Calu3 (cell line): ENCODE measurements at regions of chr1 and their contacts with region 1.

Region 1: DNA sequence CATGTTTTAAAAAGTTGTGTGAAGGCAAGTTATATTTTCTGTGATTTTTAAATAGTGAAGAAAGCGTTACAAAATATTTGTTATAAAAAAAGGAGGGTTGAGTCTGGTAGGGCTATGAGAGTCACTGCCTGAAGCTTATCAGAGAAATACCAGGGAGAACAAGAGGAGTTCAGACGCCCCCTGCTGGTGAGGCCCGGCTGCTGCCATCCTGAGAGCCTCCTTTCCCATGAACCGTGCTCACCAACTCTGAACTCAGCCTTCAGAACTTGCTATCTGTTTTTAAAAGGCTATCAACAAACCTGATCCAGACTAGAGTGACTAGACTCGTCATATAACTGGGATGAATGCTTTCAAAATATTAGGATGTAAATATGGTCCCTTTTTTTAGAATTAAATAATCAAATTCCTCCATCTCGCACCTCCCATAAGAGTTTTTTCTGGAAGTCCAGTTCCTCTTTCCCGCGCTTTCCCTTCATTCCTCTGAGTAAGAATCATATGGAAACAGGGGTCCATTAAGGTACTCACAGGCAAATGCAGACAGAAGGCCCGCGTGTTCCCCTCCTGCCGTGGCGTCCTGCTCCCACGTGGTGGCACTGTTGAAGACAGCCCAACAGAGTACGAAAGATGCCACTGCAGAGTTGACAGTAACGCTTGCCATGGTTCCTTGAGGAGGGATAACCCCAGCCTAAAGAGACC is 26.2 kb upstream of the SPATA6 start:
- DNase-seq: peak; percentile 87
- H3K4me3 Mint-ChIP-seq: peak overlapping the region; percentile 22
- H3K27ac Mint-ChIP-seq: no peak overlapping the region
- H3K4me1 Mint-ChIP-seq: peaks cover 20% of the 10 kb centered on the region
- H3K27me3 Mint-ChIP-seq: no peaks in the 10 kb centered on the region
- CTCF ChIP-seq: peak; percentile 77

Region 2: GRCh38 chr1:48093696-48094528 is 404.3 kb before region 1 on chr1:
- CTCF ChIA-PET with region 1: no interaction called
- intact Hi-C with region 1: loop called (anchors 5 kb)
- DNase-seq: peak; percentile 94
- H3K4me3 Mint-ChIP-seq: peak overlapping the region; percentile 78
- H3K27ac Mint-ChIP-seq: peak overlapping the region; percentile 67
- H3K4me1 Mint-ChIP-seq: peaks cover 14% of the 10 kb centered on the region
- H3K27me3 Mint-ChIP-seq: peaks cover 65% of the 10 kb centered on the region
- CTCF ChIP-seq: peak; percentile 95

Region 3: GRCh38 chr1:48236716-48237470 is 261.4 kb before region 1 on chr1:
- CTCF ChIA-PET with region 1: no interaction called
- intact Hi-C with region 1: loop called (anchors 5 kb)
- DNase-seq: peak; percentile 12
- H3K4me3 Mint-ChIP-seq: no peak overlapping the region
- H3K27ac Mint-ChIP-seq: no peak overlapping the region
- H3K4me1 Mint-ChIP-seq: no peaks in the 10 kb centered on the region
- H3K27me3 Mint-ChIP-seq: peaks cover 10% of the 10 kb centered on the region
- CTCF ChIP-seq: peak; percentile 29

Region 4: GRCh38 chr1:48356901-48357300 is 141.3 kb before region 1 on chr1:
- CTCF ChIA-PET with region 1: interaction called, 3 read pairs
- intact Hi-C with region 1: loop called (anchors 1 kb)
- DNase-seq: no peak
- H3K4me3 Mint-ChIP-seq: no peak overlapping the region
- H3K27ac Mint-ChIP-seq: no peak overlapping the region
- H3K4me1 Mint-ChIP-seq: no peaks in the 10 kb centered on the region
- H3K27me3 Mint-ChIP-seq: no peaks in the 10 kb centered on the region
- CTCF ChIP-seq: no peak

Region 5: DNA sequence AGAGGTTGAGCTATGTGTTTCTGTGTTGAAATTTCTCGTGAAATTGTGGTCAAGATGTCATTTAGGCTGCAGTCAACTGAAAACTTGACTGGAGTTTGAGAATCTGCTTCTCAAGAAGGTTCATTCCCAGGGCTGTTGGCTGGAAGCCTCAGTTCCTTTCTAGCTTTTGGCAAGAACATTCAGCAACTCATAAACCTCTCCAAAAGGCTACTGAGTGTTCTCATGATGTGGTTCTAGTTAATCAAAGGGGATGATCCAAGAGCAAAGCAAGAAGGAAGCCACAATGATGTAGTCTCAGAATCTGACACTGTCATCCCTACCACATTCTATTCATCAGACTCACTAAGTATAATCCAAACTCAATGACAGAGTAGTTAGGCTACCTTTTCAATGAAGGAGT is 92.8 kb before region 1 on chr1:
- CTCF ChIA-PET with region 1: no interaction called
- intact Hi-C with region 1: no loop called
- DNase-seq: no peak
- H3K4me3 Mint-ChIP-seq: no peak overlapping the region
- H3K27ac Mint-ChIP-seq: no peak overlapping the region
- H3K4me1 Mint-ChIP-seq: no peaks in the 10 kb centered on the region
- H3K27me3 Mint-ChIP-seq: no peaks in the 10 kb centered on the region
- CTCF ChIP-seq: no peak

Region 6: GRCh38 chr1:48471691-48472576 is 26.3 kb before region 1 on chr1 and contains the start of gene SPATA6:
- CTCF ChIA-PET with region 1: interaction called, 18 read pairs
- intact Hi-C with region 1: no loop called
- DNase-seq: peak; percentile 94
- H3K4me3 Mint-ChIP-seq: peak within 1 kb of the TSS; percentile 90
- H3K27ac Mint-ChIP-seq: peak within 1 kb of the TSS; percentile 87
- H3K4me1 Mint-ChIP-seq: peaks cover 22% of the 10 kb centered on the region
- H3K27me3 Mint-ChIP-seq: no peaks in the 10 kb centered on the region
- CTCF ChIP-seq: no peak
- total RNA-seq, gene SPATA6: 7.1 and 15.7 TPM in 2 replicates